ENCODE measurements at regions of chr3 and their contacts with region 1.

Region 1: DNA sequence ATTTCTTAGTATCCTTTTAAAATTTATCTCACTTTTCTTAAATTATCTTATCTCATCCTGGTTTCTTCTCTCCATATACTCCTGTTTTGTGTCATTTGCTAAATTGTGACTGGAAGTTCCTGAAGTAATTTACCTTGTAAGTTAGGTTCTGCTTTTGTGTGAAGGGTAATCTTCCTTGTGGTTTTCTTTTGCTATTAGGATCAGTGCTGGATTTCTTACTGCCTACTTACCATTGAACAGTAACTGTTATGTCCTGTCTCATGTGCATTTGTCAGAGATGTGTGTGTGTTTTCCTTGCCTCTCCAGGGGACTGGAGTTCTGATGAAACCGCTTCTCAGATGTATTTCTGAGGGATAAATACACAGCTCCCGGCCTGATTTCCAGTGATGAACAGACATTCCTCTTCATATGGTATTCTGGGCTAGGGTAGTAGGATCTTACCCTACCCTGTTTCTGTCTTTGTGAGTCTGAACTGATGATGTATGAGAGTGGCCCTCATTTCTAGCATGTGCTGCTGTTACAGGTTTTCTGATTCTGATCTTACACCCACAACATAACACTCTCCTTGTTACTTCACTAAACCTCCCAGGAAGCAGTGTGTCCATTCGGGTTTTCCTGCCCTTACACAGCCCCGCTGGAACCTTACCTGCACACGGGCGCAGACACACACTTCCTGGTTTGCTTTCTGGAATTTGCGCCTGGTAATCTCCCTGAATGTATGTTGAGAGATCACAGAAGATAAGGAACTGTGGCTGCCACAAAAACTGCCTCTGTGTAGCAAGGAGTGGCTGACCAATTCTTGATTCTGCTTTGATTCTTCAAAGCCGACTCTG is 14.7 kb downstream of the PAK2 start:
- DNase-seq: peak; percentile 83
- ATAC-seq: peak; percentile 93
- H3K4me3 ChIP-seq: peak overlapping the region; percentile 7 to 30 (median 28); a peak in 2 of 6 replicates
- H3K27ac ChIP-seq: peak overlapping the region; percentile 56
- H3K4me1 ChIP-seq: peaks cover 53% of the 10 kb centered on the region
- H3K27me3 ChIP-seq: no peaks in the 10 kb centered on the region
- CTCF ChIP-seq: no peak
- EP300 ChIP-seq: no peak
- POLR2A ChIP-seq: no peak
- RAD21 ChIP-seq: no peak

Region 2: GRCh38 chr3:196016485-196016884 is 737.8 kb before region 1 on chr3:
- CTCF ChIA-PET with region 1: no interaction called
- POLR2A ChIA-PET with region 1: no interaction called
- in situ Hi-C with region 1: no loop called
- intact Hi-C with region 1: no loop called
- DNase-seq: no peak
- ATAC-seq: no peak
- H3K4me3 ChIP-seq: no peak overlapping the region
- H3K27ac ChIP-seq: no peak overlapping the region
- H3K4me1 ChIP-seq: no peaks in the 10 kb centered on the region
- H3K27me3 ChIP-seq: peaks cover 0 to 20% of the 10 kb centered on the region in 2 experiments; a peak in 3 of 5 replicates
- CTCF ChIP-seq: no peak
- EP300 ChIP-seq: no peak
- POLR2A ChIP-seq: no peak
- RAD21 ChIP-seq: no peak

Region 3: DNA sequence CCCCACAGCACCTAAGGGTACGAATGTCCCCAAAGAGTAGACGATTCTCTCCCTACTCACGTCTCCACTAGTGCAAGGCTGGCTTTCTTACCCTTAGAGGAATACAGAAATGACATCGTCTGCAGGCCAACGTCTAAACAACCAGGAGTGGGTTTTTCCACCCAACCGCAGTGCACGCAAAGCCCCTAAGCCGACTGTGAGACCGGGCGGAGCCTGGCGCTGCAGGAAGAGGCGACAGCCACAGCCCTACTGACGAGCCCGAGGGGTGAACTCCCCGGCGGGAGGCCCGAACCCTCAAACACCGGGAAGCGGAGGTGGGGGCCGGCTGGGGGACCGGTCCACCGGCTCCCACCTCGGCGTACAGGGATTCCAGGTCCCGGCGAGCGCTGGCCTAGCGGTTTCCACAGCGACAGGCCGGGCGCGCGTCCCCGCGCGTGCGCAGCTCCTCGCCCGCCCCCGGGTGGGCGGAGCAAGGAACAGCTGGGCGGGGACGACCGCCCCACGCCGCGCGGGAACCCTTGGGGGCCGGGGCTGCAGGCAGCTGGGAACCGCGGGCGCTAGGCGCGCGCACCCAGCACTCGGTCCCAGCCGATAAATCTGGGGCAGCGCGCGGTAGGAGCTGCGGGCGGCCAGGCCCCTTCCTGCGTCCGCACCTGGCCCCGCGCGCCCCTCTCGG is 42.3 kb before region 1 on chr3 and contains the starts of genes CEP19 and PIGX:
- CTCF ChIA-PET with region 1: no interaction called
- POLR2A ChIA-PET with region 1: no interaction called
- in situ Hi-C with region 1: no loop called
- intact Hi-C with region 1: loop called (anchors 5 kb)
- DNase-seq: peak; percentile 60
- ATAC-seq: peak; percentile 85
- H3K4me3 ChIP-seq: peak within 1 kb of the TSS; percentile 90 to 97 (median 91)
- H3K27ac ChIP-seq: peak within 1 kb of the TSS; percentile 79
- H3K4me1 ChIP-seq: peaks cover 29% of the 10 kb centered on the region
- H3K27me3 ChIP-seq: peaks cover 0 to 4% of the 10 kb centered on the region in 2 experiments; a peak in 1 of 5 replicates
- CTCF ChIP-seq: no peak
- EP300 ChIP-seq: no peak
- POLR2A ChIP-seq: peak; percentile 44 to 87; a peak in 3 of 4 replicates
- RAD21 ChIP-seq: peak; percentile 63
- total RNA-seq, gene CEP19: 1.2 and 1.5 TPM in 2 replicates
- total RNA-seq, gene PIGX: 19.2 and 21.3 TPM in 2 replicates